Activated CD8-positive, alpha-beta T cell treated with anti-CD3 and anti-CD28 coated beads, Interleukin-2, amount 10 ng/mL, durations not matched to agents 7 days and 5 days (primary cell): ENCODE measurements at regions of chr1 and their contacts with region 1.

Region 1: GRCh38 chr1:179365320-179366092 is at the start of gene AXDND1:
- DNase-seq: peak; percentile 93
- ATAC-seq: peak; percentile 95
- H3K4me3 Mint-ChIP-seq: peak within 1 kb of the TSS; percentile 93
- H3K27ac Mint-ChIP-seq: peak within 1 kb of the TSS; percentile 100
- H3K4me1 Mint-ChIP-seq: peaks cover 7% of the 10 kb centered on the region
- H3K27me3 Mint-ChIP-seq: no peaks in the 10 kb centered on the region
- total RNA-seq, gene AXDND1: 1.4 TPM

Region 2: DNA sequence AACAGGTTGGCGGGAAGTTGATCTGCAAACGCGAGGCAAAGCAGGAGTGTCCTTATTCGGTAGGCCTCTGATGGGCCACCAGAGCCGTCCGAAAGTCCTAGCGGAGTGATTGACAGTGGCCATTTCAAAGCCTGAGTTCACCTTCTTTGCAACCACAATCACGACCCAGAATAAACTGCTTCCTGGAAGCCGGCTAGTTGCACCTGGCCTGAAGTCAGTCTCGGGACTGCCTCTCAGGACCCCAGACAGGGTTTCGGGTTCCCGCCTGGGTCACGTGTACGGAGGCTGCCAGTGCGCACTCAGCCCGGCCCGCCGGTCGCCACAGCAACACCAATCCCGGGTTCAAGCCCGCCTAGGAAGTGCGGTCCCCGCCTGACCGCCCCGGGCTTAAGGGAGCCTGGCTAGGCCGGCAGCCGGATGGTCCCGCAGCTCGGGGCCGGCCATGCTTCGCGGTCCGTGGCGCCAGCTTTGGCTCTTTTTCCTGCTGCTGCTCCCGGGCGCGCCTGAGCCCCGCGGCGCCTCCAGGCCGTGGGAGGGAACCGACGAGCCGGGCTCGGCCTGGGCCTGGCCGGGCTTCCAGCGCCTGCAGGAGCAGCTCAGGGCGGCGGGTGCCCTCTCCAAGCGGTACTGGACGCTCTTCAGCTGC is 283.7 kb before region 1 on chr1 and contains the start of gene TOR3A:
- CTCF ChIA-PET with region 1: interaction called, 10 read pairs
- POLR2A ChIA-PET with region 1: interaction called, 5 read pairs
- DNase-seq: peak; percentile 88
- ATAC-seq: peak; percentile 83
- H3K4me3 Mint-ChIP-seq: peak within 1 kb of the TSS; percentile 93
- H3K27ac Mint-ChIP-seq: peak within 1 kb of the TSS; percentile 93
- H3K4me1 Mint-ChIP-seq: peaks cover 30% of the 10 kb centered on the region
- H3K27me3 Mint-ChIP-seq: no peaks in the 10 kb centered on the region
- total RNA-seq, gene TOR3A: 49.3 to 50.4 TPM

Region 3: DNA sequence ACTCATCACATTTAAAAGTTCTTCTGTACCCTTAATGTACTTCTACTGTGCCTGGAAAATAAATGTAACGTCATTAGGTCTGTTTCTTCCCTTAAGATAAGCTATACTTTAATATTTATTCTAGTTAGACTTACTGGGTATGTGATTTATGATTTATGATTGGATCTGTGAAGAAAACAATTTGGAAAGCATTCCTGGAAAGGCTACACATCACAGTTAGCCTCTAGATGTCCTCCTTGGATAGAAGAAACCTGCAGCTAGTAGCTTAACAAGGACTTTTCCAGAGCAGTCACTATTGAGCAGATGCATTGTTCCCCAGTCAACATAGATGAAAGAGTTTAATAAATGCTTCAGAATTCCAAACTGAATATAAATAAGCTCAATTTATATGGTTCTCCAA is 113.8 kb before region 1 on chr1:
- CTCF ChIA-PET with region 1: interaction called, 17 read pairs
- POLR2A ChIA-PET with region 1: no interaction called
- DNase-seq: no peak
- ATAC-seq: no peak
- H3K4me3 Mint-ChIP-seq: no peak overlapping the region
- H3K27ac Mint-ChIP-seq: no peak overlapping the region
- H3K4me1 Mint-ChIP-seq: no peaks in the 10 kb centered on the region
- H3K27me3 Mint-ChIP-seq: no peaks in the 10 kb centered on the region

Region 4: DNA sequence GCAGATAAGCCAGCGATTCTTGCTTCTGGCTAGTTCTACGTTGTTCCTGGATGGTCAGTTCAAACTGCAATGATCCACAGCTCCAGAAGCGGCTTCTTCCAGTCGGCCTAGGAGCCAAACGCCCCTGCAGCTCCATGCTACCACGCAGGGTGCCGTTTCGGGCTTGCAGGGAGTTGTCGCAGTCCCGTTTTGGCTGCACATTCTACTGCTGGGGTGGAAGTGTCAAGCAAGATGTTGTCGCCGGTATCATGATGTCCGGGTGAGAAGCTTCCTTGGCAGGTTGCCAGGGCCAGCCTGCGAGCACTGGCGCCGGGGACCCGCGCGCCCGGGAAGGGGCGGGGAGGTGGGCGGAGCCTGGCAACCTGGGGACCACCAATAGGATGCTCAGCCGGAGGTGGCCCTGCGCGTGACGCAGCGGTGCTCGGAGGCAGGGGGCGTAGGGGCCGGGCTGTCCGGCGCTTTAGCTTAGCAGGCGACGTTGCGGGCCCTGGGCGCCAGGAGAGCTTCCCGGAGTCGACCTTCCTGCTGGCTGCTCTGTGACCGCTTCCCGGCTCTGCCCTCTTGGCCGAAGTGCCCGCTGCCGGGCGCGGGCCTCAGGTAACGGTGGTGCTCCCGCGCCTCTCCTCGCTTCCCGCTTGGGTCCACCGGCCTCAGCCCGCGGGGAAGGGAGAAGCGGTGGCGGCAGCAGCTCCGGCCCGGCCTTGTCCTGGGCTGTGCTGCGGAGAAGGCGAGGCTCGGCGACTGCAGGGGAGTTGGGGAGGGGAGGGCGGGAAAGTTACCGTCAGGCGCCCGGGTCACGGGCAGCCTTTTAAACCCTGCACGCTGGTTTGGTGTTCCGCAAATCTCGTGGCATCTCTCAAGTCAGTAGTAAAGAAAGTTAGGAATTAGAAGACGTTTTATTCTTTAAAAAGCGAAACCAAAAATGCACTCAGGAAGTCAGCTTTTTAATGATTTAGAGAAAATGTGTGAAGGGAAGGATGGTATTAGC is 71.9 kb before region 1 on chr1 and contains the start of gene SOAT1:
- CTCF ChIA-PET with region 1: interaction called, 11 read pairs
- POLR2A ChIA-PET with region 1: interaction called, 16 read pairs
- DNase-seq: peak; percentile 95
- ATAC-seq: peak; percentile 96
- H3K4me3 Mint-ChIP-seq: peak within 1 kb of the TSS; percentile 96
- H3K27ac Mint-ChIP-seq: peak within 1 kb of the TSS; percentile 92
- H3K4me1 Mint-ChIP-seq: peaks cover 46% of the 10 kb centered on the region
- H3K27me3 Mint-ChIP-seq: no peaks in the 10 kb centered on the region
- total RNA-seq, gene SOAT1: 76.1 to 78.3 TPM